ENCODE measurements at regions of chr2 and their contacts with region 1.

Region 1: DNA sequence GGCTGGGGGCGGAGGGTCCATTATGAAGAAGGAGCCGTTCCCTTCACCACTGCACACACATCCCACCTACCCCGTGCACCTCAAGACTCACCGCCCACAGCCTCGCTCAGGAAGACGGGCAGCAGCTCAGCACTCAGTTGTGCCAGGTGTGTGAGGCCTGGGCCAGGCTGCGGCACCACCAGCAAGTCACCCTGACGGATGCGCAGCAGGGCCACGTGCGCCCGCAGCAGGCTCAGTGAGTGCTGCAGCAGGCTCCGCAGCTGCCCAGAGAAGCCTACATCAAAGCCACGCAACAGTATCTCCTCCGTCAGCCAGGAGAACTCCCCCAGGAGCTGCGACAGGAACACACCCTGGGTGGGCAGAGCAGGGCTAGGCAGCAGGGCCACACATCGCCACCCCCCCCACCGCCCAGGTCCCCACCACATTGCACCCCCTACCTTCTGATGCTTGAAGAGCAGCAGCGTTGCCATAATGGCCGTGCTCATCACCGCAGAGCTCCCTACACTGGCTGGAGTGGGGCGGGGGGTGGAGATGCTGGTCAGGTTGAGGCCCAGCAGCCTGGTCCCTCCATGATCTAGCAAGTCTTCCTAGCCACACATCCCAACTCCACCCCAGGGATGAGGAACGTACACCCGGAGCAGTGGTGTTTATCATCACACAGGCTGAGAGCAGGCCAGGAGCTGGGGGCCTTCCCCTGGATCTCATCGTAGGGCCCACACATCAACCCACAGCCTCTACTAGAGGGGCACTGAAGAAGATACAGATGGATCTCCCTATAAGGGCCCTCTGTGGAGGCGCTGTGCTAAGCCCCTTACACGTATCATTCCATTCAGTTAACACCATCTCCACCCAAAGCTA is 10.2 kb downstream of the GPAT2 start:
- DNase-seq: no peak
- ATAC-seq: no peak
- H3K4me3 ChIP-seq: no peak overlapping the region
- H3K4me3 Mint-ChIP-seq: no peak overlapping the region
- H3K27ac ChIP-seq: no peak overlapping the region
- H3K27ac Mint-ChIP-seq: no peak overlapping the region
- H3K4me1 ChIP-seq: no peaks in the 10 kb centered on the region
- H3K4me1 Mint-ChIP-seq: peaks cover 3% of the 10 kb centered on the region
- H3K27me3 ChIP-seq: no peaks in the 10 kb centered on the region
- H3K27me3 Mint-ChIP-seq: no peaks in the 10 kb centered on the region
- CTCF ChIP-seq: no peak

Region 2: DNA sequence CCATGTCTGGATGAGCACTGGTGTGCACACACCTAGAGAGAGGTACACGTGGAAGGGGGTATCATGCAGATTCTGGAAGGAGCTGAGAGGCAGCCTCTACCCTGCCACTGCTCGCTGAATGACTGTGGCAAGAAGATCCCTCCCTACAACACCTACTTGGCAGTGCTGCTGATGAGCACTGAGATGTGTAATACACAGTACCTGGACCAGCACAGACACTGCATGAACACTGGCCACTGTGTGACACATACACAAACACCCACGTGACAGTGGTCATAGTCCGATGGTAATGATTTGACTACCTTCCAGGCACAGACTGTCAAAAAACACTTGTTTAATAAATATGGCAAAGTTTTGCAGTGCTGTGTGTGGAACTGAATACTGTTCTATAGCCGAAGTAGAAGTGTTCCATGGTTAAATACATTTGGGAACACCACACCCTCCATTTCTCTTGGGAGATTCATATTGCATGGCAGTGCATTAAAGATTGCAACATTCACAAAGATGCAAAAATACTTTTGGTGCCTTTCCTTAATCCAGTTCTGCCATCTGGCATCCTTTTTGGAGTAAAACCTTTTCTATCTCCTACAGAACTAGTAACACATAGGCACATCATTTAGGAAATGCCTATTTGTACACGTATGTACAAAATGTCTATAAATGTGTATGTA is 932.5 kb before region 1 on chr2:
- CTCF ChIA-PET with region 1: no interaction called
- POLR2A ChIA-PET with region 1: no interaction called
- intact Hi-C with region 1: no loop called
- DNase-seq: no peak
- ATAC-seq: no peak
- H3K4me3 ChIP-seq: no peak overlapping the region
- H3K4me3 Mint-ChIP-seq: no peak overlapping the region
- H3K27ac ChIP-seq: no peak overlapping the region
- H3K27ac Mint-ChIP-seq: no peak overlapping the region
- H3K4me1 ChIP-seq: no peaks in the 10 kb centered on the region
- H3K4me1 Mint-ChIP-seq: peaks cover 3% of the 10 kb centered on the region
- H3K27me3 ChIP-seq: no peaks in the 10 kb centered on the region
- H3K27me3 Mint-ChIP-seq: no peaks in the 10 kb centered on the region
- CTCF ChIP-seq: no peak

Region 3: DNA sequence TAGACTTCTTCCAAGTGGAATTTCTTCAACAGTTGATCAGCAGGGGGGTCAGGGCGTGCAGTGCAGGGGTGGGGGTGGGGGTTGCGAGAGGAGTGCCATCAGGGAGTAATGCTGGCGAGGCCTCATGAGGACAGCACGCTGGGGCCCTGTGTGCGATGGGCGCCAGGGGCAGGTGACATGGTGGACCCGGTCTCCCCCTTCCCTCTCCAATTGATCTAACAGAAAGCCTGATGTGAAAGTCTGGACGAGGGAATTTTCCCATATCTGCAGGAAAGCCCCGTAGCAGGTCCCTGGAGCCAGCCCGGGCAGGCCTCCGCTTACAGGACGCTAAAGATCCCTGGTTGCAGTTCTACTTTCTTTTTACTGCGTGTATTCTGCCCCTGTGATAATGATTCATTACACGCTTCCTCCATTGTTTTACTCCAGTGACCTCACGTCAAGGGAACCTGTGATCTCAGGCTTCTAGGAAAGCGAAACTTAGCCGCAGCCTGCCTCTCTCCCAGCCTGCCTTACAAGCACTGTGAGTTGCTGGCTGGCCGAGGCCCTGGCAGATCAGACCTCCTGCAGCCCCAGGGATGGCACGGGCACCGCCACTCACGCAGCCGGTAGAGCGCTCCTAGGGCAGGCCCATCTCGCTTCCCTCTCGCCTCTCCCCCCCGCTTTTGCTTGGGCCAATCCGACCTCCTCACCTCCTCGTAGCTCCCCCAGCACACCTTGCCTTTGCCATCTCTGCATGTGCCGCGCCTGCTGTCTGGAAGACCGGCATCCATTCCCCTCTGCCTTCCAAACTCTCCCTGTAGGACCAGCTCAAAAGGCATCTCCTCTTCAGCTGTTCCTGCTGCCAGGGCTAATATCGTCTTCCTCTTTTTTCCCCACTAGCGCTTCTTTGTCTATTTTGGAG is 461.4 kb after region 1 on chr2:
- CTCF ChIA-PET with region 1: no interaction called
- POLR2A ChIA-PET with region 1: interaction called, 10 read pairs
- intact Hi-C with region 1: no loop called
- DNase-seq: peak; percentile 87
- ATAC-seq: peak; percentile 86
- H3K4me3 ChIP-seq: peak overlapping the region in 4 of 5 experiments; percentile 47 to 59 (median 57)
- H3K4me3 Mint-ChIP-seq: peak overlapping the region; percentile 93
- H3K27ac ChIP-seq: peak overlapping the region; percentile 59 to 72
- H3K27ac Mint-ChIP-seq: peak overlapping the region; percentile 93
- H3K4me1 ChIP-seq: peaks cover 10 to 15% of the 10 kb centered on the region in 2 donors
- H3K4me1 Mint-ChIP-seq: peaks cover 22% of the 10 kb centered on the region
- H3K27me3 ChIP-seq: peaks cover 0 to 3% (median 0%) of the 10 kb centered on the region in 4 experiments
- H3K27me3 Mint-ChIP-seq: no peaks in the 10 kb centered on the region
- CTCF ChIP-seq: no peak